Natural killer cell (primary cell): ENCODE measurements at regions of chr3 and their contacts with region 1.

Region 1: GRCh38 chr3:59052803-59053411 is 3.1 kb upstream of the CFAP20DC start:
- DNase-seq: peak in 1 of 2 donors; percentile 52
- ATAC-seq: no peak
- H3K4me3 ChIP-seq: no peak overlapping the region
- H3K4me3 Mint-ChIP-seq: no peak overlapping the region
- H3K27ac ChIP-seq: no peak overlapping the region
- H3K27ac Mint-ChIP-seq: no peak overlapping the region
- H3K4me1 ChIP-seq: peaks cover 10% of the 10 kb centered on the region
- H3K4me1 Mint-ChIP-seq: peaks cover 7% of the 10 kb centered on the region in 2 donors
- H3K27me3 ChIP-seq: no peaks in the 10 kb centered on the region
- H3K27me3 Mint-ChIP-seq: peaks cover 3 to 5% of the 10 kb centered on the region in 2 donors
- CTCF ChIP-seq: peak; percentile 52

Region 2: GRCh38 chr3:58640700-58641372 is 412.1 kb before region 1 on chr3:
- intact Hi-C with region 1: loop called (anchors 2 kb)
- DNase-seq: peak; percentile 32 to 57
- ATAC-seq: peak; percentile 60 to 90 (median 72)
- H3K4me3 ChIP-seq: no peak overlapping the region
- H3K4me3 Mint-ChIP-seq: no peak overlapping the region
- H3K27ac ChIP-seq: no peak overlapping the region
- H3K27ac Mint-ChIP-seq: no peak overlapping the region
- H3K4me1 ChIP-seq: no peaks in the 10 kb centered on the region
- H3K4me1 Mint-ChIP-seq: peaks cover 0 to 6% of the 10 kb centered on the region in 2 donors
- H3K27me3 ChIP-seq: no peaks in the 10 kb centered on the region
- H3K27me3 Mint-ChIP-seq: no peaks in the 10 kb centered on the region
- CTCF ChIP-seq: peak; percentile 63